Right cardiac atrium (tissue), 5 donors: ENCODE measurements at regions of chr5 and their contacts with region 1.

Region 1: GRCh38 chr5:140647042-140647341 is 438 bp downstream of the NDUFA2 start:
- DNase-seq: no peak
- ATAC-seq: peak in 1 of 2 donors; percentile 8
- H3K4me3 ChIP-seq: peak overlapping the region; percentile 68
- H3K27ac ChIP-seq: peak overlapping the region; percentile 82
- H3K4me1 ChIP-seq: no peaks in the 10 kb centered on the region
- H3K27me3 ChIP-seq: no peaks in the 10 kb centered on the region

Region 2: DNA sequence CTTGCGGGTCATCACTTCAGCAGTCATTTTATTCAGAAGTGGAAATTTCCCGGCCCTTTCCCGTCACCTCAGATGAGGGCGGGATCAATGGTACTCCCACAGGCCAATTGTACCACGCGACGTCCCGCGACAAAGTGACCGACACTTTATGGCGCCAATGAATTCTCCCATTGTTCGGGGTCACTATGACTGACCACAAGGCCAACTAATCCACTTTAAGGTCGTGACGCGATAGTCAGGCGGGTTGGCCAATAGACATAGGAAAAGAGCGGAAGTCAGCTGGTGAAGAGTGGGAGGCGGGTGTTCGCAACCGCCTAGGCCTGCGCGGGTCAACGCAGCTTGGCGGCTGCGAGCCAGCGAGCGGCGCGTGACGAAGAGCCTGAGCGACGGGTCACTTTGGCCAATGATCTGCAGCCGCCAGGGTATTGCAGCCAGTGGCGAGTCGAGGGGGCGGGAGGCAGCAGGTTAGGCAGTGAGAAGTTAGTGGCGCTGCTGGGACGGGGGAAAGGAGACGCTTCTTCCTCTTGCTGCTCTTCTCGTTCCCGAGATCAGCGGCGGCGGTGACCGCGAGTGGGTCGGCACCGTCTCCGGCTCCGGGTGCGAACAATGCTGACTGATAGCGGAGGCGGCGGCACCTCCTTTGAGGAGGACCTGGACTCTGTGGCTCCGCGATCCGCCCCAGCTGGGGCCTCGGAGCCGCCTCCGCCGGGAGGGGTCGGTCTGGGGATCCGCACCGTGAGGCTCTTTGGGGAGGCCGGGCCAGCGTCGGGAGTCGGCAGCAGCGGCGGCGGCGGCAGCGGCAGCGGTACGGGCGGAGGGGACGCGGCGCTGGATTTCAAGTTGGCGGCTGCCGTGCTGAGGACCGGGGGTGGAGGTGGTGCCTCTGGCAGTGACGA is 245.4 kb before region 1 on chr5 and contains the start of gene ANKHD1:
- intact Hi-C with region 1: loop called in 1 of 4 experiments (anchors 10 kb)
- DNase-seq: peak; percentile 99 to 100 (median 99)
- ATAC-seq: peak; percentile 95 to 96
- H3K4me3 ChIP-seq: peak within 1 kb of the TSS; percentile 84
- H3K27ac ChIP-seq: peak within 1 kb of the TSS; percentile 95
- H3K4me1 ChIP-seq: peaks cover 8% of the 10 kb centered on the region
- H3K27me3 ChIP-seq: no peaks in the 10 kb centered on the region
- total RNA-seq, gene ANKHD1: 59.8 to 69.1 (median 62.4) TPM

Region 3: GRCh38 chr5:140547508-140548299 is 99.3 kb before region 1 on chr5 and contains the start of gene EIF4EBP3:
- intact Hi-C with region 1: no loop called
- DNase-seq: peak; percentile 98 to 99 (median 99)
- ATAC-seq: peak; percentile 95 to 96
- H3K4me3 ChIP-seq: peak within 1 kb of the TSS; percentile 56
- H3K27ac ChIP-seq: peak within 1 kb of the TSS; percentile 98
- H3K4me1 ChIP-seq: peaks cover 21% of the 10 kb centered on the region
- H3K27me3 ChIP-seq: no peaks in the 10 kb centered on the region
- total RNA-seq, gene EIF4EBP3: 11.2 to 24.0 (median 13.2) TPM

Region 4: DNA sequence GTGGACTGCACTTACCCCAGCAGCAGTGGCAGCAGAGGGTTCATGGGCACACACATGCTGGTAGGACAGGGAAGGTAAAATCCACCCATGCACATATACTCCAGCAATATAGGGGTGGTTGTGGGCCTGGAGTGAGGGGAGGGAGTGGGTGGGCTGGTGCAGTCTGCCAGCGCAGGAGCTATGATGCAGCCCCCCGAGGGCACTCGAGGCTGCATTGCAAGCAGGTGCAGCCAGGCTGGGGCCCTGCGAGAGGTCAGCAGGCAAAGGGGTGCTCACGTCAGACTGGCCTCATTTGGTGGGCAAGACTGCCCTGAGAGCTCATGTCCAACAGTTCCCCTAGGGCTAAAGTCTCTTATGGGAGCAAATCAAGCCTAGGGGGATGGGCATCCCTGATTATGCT is 106.6 kb after region 1 on chr5:
- intact Hi-C with region 1: no loop called
- DNase-seq: peak in 1 of 3 donors; percentile 27
- ATAC-seq: no peak
- H3K4me3 ChIP-seq: no peak overlapping the region
- H3K27ac ChIP-seq: no peak overlapping the region
- H3K4me1 ChIP-seq: no peaks in the 10 kb centered on the region
- H3K27me3 ChIP-seq: no peaks in the 10 kb centered on the region

Region 5: GRCh38 chr5:140840978-140841959 is 194.3 kb after region 1 on chr5 and contains the start of gene PCDHA8:
- intact Hi-C with region 1: no loop called
- DNase-seq: no peak
- ATAC-seq: no peak
- H3K4me3 ChIP-seq: no peak within 1 kb of the TSS
- H3K27ac ChIP-seq: no peak within 1 kb of the TSS
- H3K4me1 ChIP-seq: no peaks in the 10 kb centered on the region
- H3K27me3 ChIP-seq: peaks cover 3% of the 10 kb centered on the region
- total RNA-seq, gene PCDHA8: 0.06 TPM in 2 of 4 donors, not detected in the others

Region 6: GRCh38 chr5:141986072-141986471 is 1339.1 kb after region 1 on chr5:
- intact Hi-C with region 1: no loop called
- DNase-seq: no peak
- ATAC-seq: no peak
- H3K4me3 ChIP-seq: no peak overlapping the region
- H3K27ac ChIP-seq: no peak overlapping the region
- H3K4me1 ChIP-seq: no peaks in the 10 kb centered on the region
- H3K27me3 ChIP-seq: no peaks in the 10 kb centered on the region